ENCODE measurements at regions of chr9 and their contacts with region 1.

Region 1: DNA sequence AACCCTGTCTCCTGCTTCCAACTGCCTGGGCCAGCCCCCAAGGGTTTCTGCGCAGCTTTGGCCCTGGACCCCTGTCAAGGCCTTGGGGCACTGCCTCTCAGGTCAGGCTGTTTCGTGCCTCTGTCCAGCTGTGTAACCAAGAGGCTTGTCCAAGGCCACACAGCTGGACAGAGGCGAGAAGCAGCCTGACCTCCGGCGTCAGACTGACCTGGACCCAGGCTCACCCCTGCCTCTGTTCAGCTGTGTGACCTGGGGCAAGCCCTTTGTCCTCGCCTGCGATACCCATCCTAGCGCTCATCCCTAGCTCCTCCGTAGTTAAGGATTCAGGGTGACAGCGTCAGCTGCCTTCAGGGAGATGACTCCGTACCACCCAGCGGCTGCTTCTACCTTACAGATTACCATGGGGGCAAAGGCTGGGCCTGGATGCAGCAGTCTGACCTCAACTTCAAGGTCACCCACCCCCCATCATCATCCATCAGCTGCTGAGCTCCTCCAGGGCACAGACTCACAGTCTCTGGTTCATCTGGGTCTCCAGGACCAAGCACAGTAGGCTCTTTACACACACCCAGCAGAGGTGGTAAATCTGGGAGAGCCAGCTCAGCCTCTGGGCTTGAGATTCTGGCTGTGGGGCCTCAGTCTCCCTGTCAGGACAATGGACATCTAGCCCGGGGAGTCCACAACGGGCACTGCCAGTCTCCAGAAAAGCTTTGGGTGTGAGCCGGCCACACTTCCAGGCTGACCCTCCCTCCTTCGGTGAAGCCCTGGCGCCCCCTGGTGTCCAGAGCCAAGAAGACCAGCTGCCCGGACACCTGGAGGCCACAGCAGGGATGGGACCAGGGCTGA is 7.9 kb downstream of the AK1 start:
- DNase-seq: peak; percentile 93
- ATAC-seq: peak; percentile 55 to 70

Region 2: GRCh38 chr9:127785023-127785932 is 84.3 kb before region 1 on chr9:
- intact Hi-C with region 1: loop called in 1 of 2 experiments (anchors 5 kb)
- DNase-seq: peak; percentile 91
- ATAC-seq: peak; percentile 62 to 64

Region 3: GRCh38 chr9:127802576-127803443 is 66.7 kb before region 1 on chr9 and contains the start of gene FPGS:
- intact Hi-C with region 1: loop called (anchors 5 to 10 kb)
- DNase-seq: peak; percentile 94
- ATAC-seq: peak; percentile 93 to 94
- total RNA-seq, gene FPGS: 40.4 to 59.5 TPM

Region 4: DNA sequence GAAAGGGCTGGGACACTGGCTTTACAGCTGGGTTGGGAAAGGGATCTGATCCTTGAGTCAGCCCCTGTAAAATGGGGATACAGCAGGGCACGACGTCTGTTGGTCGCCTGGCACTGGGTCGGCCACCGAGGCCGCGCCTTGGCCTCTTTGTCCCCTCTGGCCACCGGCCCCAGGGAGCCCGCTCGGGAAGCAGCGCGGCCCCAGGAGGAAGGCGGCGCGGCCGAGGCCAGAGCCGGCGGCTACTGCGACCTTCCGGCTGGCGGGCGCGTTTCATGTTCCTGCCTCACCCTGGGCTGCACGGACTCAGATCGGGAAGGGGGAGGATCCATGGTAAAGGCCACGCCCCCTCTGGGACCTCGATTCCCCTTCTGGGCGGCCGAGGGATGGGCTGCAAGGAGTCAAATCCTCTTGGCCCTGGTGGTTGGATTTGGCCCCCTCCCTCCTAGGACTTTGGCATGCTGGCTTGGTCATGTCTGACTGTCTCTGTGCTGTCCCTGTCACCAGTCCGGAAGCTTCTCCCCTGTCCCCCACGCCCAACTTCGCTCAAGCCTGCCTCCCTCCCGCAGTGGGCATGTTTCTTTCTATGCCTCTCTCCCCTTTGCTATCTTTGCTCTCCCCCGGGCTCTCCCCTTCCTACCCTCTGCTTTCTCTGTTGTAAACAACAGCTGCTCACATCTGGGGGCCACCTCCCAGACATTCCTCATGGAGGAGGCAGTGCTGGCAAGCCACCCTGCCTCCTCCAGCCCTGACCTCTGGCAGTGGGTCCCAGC is 41.1 kb before region 1 on chr9:
- intact Hi-C with region 1: loop called in 1 of 2 experiments (anchors 5 kb)
- DNase-seq: peak; percentile 92
- ATAC-seq: peak; percentile 86 to 90

Measured in left cardiac atrium (tissue), 4 donors.